GM12878 (cell line): ENCODE measurements at regions of chr3 and their contacts with region 1.

Region 1: DNA sequence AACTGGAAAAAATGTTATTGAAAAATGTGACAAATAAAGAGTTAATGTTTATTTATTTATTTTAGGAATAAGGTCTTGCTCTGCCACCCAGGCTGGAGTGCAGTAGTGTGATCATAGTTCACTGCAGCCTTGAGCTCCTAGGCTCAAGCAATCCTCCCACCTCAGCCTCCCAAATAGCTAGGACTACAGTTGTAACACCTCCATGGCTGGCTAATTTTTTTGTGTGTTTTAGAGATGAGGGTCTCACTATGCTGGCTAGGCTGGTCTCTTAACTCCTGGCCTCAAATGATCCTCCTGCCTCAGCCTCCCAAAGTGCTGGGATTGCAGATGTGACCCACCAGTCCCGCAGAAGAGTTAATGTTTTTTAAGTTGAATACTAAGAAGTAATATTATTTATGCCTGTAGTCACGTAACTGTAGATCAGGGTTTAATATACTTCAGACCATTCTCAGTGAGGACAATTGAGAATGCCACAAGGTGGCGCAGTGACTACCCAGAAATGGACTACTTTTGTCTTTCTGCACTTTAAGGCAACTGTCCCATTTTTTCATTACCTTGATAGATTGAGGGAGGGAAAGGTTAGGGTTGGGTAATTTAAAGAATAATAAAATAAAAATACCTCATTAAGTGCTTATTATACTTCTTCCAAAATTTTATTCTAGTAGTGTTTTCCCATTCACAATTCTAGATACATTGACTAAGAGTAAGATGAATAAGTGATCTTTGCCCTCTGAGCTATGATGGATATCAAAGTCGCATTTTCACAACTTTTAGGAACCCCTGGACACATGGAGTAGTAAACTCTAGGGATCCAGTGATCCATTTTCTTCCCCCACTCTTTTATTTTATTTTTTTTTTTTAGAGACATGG is 6.0 kb downstream of the MUC13 start:
- DNase-seq: no peak
- ATAC-seq: peak; percentile 80
- H3K4me3 ChIP-seq: no peak overlapping the region
- H3K27ac ChIP-seq: no peak overlapping the region
- H3K4me1 ChIP-seq: peaks cover 15% of the 10 kb centered on the region; the same call in 1 of the 2 replicates
- H3K27me3 ChIP-seq: no peaks in the 10 kb centered on the region
- CTCF ChIP-seq: peak; percentile 63 to 75 (median 64); a peak in 5 of 6 replicates
- EP300 ChIP-seq: no peak
- POLR2A ChIP-seq: no peak
- RAD21 ChIP-seq: peak; percentile 74

Region 2: DNA sequence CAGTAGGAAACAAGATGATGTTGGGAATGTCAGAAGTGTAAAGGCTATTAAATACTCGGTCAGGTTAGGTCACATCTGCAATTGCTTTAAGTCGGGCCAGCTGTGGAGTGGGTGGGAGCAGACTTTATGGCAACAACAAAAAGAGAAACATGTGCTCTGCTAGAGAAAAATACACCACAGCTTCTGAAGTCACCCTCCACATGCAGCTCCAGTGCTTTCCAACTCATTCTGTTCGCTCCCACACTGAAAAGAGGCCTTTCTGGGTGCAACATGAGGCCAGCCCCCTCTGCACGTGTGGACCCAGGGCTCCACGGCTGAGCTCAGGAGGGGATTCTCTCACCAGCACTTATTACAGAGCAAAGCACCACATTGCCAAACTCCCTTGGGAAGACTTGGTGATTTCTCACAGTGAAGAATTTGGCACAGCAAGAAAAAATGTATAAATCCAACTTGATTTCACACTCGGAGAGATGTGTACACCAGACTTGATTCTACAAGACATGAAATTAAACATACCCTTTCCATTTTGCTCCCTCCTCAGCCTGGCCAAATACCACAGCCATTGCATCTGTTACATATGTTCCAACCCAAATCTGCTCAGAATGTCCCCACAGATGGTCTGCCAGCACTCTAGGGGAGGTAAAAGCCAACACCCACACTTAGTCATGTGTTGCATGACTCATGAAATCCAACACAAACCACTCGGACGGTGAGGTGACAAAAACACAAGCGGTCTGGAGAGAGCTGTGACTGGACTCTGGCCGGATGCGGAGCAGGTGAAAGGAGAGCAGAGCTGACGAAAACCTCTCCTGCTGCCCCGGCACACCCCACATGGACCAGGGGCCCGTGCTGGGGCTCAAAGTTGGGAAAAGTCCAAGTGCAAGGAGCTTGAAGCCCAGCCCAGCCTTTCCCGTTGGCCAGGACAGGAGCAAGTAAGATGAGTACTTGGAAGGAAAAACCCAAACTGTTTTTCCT is 116.0 kb before region 1 on chr3:
- CTCF ChIA-PET with region 1: no interaction called
- POLR2A ChIA-PET with region 1: no interaction called
- RAD21 ChIA-PET with region 1: no interaction called
- SMC1A ChIA-PET with region 1: no interaction called
- in situ Hi-C with region 1: no loop called
- intact Hi-C with region 1: no loop called
- DNase-seq: no peak
- ATAC-seq: peak; percentile 90
- H3K4me3 ChIP-seq: no peak overlapping the region
- H3K27ac ChIP-seq: no peak overlapping the region
- H3K4me1 ChIP-seq: no peaks in the 10 kb centered on the region
- H3K27me3 ChIP-seq: no peaks in the 10 kb centered on the region; a peak in 2 of 4 replicates
- CTCF ChIP-seq: no peak
- EP300 ChIP-seq: no peak
- POLR2A ChIP-seq: no peak
- RAD21 ChIP-seq: no peak

Region 3: DNA sequence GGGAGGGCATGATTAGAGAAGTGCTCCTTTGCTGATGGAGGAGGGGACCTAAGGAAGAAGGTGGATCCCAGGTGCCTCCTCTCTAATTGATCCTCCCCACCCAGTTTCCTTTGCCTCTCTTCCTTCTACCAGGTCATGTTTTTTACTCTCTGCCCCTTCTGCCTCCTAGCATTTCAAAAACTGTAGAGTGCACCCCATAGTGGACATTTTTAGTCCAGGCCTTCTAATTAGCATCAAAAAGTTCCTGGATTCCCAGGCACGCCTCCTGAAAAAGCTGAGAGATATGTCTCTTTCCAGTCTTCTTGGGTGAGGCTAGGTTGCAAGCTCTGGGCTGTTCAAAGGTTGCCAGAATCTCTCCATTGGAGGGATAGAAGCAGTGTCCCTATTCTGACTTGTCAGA is 22.7 kb before region 1 on chr3:
- CTCF ChIA-PET with region 1: interaction called, 16 read pairs
- POLR2A ChIA-PET with region 1: interaction called, 3 read pairs
- RAD21 ChIA-PET with region 1: interaction called, 3 read pairs
- SMC1A ChIA-PET with region 1: interaction called, 11 read pairs
- in situ Hi-C with region 1: no loop called
- intact Hi-C with region 1: no loop called
- DNase-seq: no peak
- ATAC-seq: no peak
- H3K4me3 ChIP-seq: no peak overlapping the region
- H3K27ac ChIP-seq: no peak overlapping the region
- H3K4me1 ChIP-seq: no peaks in the 10 kb centered on the region
- H3K27me3 ChIP-seq: no peaks in the 10 kb centered on the region; a peak in 2 of 4 replicates
- CTCF ChIP-seq: no peak
- EP300 ChIP-seq: no peak
- POLR2A ChIP-seq: no peak
- RAD21 ChIP-seq: no peak

Region 4: GRCh38 chr3:124941771-124942170 is 13.2 kb after region 1 on chr3:
- CTCF ChIA-PET with region 1: interaction called, 40 read pairs
- POLR2A ChIA-PET with region 1: interaction called, 5 read pairs
- RAD21 ChIA-PET with region 1: interaction called, 4 read pairs
- SMC1A ChIA-PET with region 1: interaction called, 18 read pairs
- in situ Hi-C with region 1: no loop called
- intact Hi-C with region 1: no loop called
- DNase-seq: no peak
- ATAC-seq: peak; percentile 49
- H3K4me3 ChIP-seq: no peak overlapping the region
- H3K27ac ChIP-seq: no peak overlapping the region
- H3K4me1 ChIP-seq: no peaks in the 10 kb centered on the region; the same call in 1 of the 2 replicates
- H3K27me3 ChIP-seq: no peaks in the 10 kb centered on the region; a peak in 1 of 4 replicates
- CTCF ChIP-seq: no peak
- EP300 ChIP-seq: no peak
- POLR2A ChIP-seq: no peak
- RAD21 ChIP-seq: no peak

Region 5: DNA sequence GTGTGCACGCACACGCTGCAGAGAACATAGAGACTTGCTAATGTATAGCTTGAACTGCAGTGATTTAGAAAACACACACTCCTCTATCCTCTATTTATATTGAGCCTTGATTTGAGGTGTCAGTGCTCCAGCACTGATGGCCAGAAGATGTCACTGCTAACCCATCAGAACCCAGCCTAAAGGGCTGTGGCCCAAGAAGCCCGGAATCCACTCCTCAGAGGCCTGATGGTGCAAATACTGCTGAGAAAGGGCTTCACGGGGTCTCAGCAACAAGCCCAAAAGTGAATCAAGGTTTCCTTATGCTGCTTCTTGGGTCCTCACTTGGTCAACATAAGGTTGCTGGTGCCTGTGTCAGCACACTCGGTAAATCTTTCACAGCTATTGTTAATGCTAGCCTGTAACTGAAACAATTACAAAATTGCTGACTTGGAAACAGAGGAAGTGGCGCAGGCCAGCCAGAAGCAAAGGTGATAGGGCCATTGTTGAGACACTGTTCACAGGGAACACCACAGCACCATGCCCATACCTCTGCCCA is 67.0 kb after region 1 on chr3:
- CTCF ChIA-PET with region 1: interaction called, 17 read pairs
- POLR2A ChIA-PET with region 1: interaction called, 3 read pairs
- RAD21 ChIA-PET with region 1: interaction called, 6 read pairs
- SMC1A ChIA-PET with region 1: interaction called, 23 read pairs
- in situ Hi-C with region 1: no loop called
- intact Hi-C with region 1: no loop called
- DNase-seq: peak; percentile 20
- ATAC-seq: peak; percentile 96
- H3K4me3 ChIP-seq: no peak overlapping the region
- H3K27ac ChIP-seq: peak overlapping the region; percentile 38
- H3K4me1 ChIP-seq: peaks cover 5% of the 10 kb centered on the region
- H3K27me3 ChIP-seq: no peaks in the 10 kb centered on the region
- CTCF ChIP-seq: peak; percentile 66 to 92 (median 75); a peak in 4 of 6 replicates
- EP300 ChIP-seq: no peak
- POLR2A ChIP-seq: no peak
- RAD21 ChIP-seq: peak; percentile 91

Region 6: DNA sequence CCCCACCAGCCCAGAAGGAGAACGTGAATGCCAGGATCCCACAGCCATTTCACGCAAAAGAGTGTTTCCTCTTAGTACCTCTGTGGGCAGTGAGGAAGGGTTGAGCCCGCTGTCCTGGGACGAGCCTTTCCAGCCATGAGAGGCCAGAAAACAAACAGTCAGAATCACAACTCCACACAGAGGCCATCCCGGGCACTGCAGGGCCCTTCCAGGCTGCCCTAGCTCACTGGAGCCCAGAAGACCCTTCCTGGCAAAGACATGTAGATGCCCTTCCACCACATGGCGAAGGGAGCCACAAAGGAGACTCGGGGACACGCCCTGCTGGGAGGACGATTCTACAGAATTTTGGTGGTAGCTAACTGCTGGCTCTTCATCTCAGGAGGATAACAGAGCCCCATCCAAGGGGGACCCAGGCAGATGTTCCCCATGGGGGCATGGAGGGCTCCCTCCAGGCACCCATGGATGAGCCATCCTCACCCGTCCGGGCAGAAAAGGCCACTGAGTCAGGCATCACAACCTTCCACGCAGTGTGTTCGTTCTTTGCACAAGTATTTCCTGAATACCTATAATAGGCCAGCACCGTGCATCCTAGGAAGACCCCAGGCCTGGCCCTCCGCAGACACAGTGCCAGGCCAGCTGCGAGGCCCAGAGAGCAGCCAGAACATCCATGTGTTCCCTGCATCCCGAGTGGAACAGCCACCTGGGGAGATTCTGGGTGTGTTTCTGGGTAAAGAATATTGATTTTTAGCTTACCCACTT is 236.8 kb after region 1 on chr3:
- CTCF ChIA-PET with region 1: interaction called, 8 read pairs
- POLR2A ChIA-PET with region 1: no interaction called
- RAD21 ChIA-PET with region 1: interaction called, 11 read pairs
- SMC1A ChIA-PET with region 1: interaction called, 4 read pairs
- in situ Hi-C with region 1: no loop called
- intact Hi-C with region 1: loop called (anchors 10 kb)
- DNase-seq: no peak
- ATAC-seq: peak; percentile 78
- H3K4me3 ChIP-seq: no peak overlapping the region
- H3K27ac ChIP-seq: no peak overlapping the region
- H3K4me1 ChIP-seq: peaks cover 17% of the 10 kb centered on the region
- H3K27me3 ChIP-seq: no peaks in the 10 kb centered on the region
- CTCF ChIP-seq: peak; percentile 24 to 50 (median 45); a peak in 5 of 6 replicates
- EP300 ChIP-seq: no peak
- POLR2A ChIP-seq: no peak
- RAD21 ChIP-seq: peak; percentile 57

Region 7: DNA sequence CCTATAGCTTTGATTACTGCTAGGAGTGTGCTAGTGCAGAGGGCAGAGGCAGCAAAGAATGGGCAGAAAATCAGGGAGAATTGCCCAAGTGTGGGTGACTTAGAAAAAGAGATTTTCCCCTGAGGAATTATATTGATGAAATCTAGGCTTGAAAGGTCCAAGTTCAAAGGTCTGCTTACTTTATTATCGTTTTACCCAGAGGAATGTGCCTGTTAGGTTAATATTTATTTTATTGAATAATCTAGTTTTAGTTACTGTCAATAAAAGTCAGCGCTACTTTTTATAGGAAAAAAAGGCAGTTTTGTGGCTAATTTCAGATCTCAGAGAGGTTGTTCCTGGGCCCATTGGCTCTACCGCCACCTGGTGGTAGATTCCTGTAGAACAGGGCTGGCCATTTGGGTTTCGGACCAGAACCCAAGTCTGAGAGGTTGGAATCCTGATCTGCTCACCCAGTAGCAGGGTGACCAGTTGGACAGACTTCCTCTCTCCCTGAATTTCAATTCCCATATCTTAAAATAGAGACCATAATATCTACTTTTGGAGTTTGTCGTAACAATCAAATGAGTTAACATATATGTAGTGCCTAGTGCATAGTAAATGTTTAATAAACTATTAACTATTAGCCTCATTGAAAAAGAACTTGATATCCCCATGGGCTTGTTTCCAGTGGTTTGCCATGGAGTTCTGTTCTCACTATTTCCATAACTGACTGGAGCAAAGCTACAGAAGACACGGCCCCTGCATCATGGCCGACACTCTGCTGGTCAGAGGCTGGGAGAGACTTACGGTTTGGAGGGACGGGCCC is 509.3 kb after region 1 on chr3:
- CTCF ChIA-PET with region 1: interaction called, 6 read pairs
- POLR2A ChIA-PET with region 1: no interaction called
- RAD21 ChIA-PET with region 1: interaction called, 5 read pairs
- SMC1A ChIA-PET with region 1: interaction called, 7 read pairs
- in situ Hi-C with region 1: no loop called
- intact Hi-C with region 1: loop called (anchors 2 kb)
- DNase-seq: no peak
- ATAC-seq: peak; percentile 45
- H3K4me3 ChIP-seq: no peak overlapping the region
- H3K27ac ChIP-seq: no peak overlapping the region
- H3K4me1 ChIP-seq: peaks cover 19% of the 10 kb centered on the region
- H3K27me3 ChIP-seq: no peaks in the 10 kb centered on the region
- CTCF ChIP-seq: peak; percentile 92 to 96 (median 92)
- EP300 ChIP-seq: no peak
- POLR2A ChIP-seq: no peak
- RAD21 ChIP-seq: peak; percentile 97